ENCODE measurements at regions of chr13 and their contacts with region 1.

Region 1: DNA sequence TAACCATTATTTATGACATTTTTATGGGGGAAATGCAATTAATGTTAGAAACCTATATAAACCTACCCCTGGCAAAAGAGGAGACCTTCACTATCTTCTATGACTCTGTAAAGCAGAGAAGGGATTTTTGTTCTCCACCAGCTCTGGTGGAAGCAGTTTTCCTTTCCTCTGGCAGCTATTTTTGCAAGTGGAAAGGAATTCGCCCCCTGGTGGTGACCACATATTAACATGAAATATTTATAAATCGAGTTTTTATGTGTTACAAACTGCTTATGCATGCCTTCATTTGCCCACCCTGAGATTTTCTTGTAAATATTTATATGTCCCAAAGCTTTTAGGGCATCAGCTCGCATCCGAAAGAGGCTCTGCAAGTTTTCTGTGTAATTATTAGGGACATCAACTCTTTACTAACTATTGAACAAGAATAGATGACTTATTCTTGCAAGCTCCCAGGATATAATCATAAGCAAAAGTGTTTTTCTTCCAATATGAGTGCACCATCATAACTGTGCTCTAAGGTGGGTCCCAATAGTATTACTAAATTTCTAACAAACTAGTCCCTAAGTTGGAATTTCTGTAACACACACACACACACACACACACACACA is 62.4 kb downstream of the SERTM1 start:
- DNase-seq: no peak

Region 2: GRCh38 chr13:35978603-35979316 is 757.5 kb before region 1 on chr13:
- intact Hi-C with region 1: loop called in 1 of 2 experiments (anchors 10 kb)
- DNase-seq: no peak

Region 3: DNA sequence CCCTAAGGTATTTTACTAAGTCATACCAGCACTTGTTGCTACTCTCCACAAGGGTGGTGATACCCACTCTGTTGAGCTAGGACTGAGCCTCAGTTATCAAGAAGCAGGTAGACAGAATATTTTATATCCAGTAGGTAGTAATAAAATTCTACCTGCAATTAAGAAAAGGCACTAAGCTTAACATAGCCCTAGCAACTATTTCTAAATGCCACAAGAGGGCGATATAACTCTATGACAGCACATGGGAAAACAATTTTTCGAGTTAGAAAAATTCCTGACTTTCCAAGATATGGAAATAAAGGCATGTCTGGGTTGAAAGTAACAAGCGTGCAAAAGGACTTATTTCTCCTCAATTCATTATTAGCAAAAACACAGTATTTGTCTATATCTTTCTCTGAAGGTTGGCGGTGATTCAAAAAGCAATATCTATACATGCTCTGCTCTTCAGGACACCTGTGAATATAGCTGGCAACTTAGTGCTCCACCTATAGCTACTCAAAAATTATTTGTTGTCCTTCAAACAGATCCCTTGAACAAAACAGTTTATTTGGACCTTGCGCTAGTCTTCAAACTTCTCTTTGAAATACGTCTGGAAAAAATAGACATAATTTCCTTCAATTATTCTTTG is 453.3 kb before region 1 on chr13:
- intact Hi-C with region 1: loop called (anchors 5 to 10 kb)
- DNase-seq: no peak

Region 4: GRCh38 chr13:36420437-36420891 is 315.8 kb before region 1 on chr13:
- intact Hi-C with region 1: loop called in 1 of 2 experiments (anchors 10 kb)
- DNase-seq: peak; percentile 83

Region 5: DNA sequence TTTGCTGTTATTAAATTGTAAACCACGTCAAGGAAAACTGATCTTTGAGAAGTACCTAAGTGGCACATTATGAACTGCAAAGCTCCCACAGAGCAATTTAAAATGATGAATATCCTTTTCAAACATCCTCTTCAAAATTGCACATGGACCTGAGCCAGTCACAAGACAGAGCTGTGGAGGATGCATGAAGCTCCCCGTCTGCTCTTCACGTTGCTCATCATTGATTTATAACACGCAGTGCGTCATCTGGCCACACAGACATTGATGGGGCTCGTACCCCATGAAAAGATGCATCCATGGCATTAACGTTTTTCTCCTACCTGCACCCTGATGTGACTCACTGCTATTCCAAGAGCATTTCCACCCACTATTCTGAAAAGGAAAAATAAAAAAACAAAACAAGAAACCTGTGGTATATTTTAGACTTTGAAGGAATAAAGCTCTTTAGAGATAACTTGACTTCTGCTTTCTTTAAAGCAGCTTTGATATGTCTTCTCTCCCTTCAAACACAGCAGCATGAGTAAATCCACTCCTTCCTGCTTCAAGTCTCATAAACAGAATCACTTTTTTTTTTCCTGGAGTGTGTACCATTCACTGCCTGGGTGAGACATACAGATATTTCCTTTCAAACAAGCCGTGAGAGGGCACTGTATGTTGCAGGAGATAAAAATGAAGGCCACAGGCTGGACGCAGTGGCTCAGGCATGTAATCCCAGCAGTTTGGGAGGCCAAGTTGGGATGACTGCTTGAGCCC is 69.6 kb before region 1 on chr13:
- intact Hi-C with region 1: loop called in 1 of 2 experiments (anchors 1 kb)
- DNase-seq: no peak

Region 6: DNA sequence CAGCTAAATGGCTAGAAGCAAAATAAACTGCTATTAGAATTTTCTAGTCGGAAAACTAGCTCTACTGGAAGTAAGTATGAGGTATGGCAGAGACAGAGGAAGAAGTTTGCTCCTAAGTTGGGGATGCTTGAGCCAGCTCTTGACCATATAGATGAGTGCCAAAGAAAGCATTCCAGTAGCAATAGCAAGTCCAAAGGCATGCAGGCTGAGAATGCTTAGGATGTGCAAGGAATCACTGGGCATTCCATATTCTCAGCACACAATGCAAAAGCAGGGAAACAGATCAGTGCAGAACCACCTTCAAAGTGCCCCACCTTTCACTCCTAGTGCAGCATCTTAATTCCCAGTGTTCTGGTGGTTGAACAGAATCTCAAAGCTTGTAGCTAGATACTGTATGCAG is 29.5 kb before region 1 on chr13:
- intact Hi-C with region 1: no loop called
- DNase-seq: no peak

Measured in posterior vena cava (tissue), 2 donors.